PC-9 (cell line): ENCODE measurements at regions of chr14 and their contacts with region 1.

Region 1: DNA sequence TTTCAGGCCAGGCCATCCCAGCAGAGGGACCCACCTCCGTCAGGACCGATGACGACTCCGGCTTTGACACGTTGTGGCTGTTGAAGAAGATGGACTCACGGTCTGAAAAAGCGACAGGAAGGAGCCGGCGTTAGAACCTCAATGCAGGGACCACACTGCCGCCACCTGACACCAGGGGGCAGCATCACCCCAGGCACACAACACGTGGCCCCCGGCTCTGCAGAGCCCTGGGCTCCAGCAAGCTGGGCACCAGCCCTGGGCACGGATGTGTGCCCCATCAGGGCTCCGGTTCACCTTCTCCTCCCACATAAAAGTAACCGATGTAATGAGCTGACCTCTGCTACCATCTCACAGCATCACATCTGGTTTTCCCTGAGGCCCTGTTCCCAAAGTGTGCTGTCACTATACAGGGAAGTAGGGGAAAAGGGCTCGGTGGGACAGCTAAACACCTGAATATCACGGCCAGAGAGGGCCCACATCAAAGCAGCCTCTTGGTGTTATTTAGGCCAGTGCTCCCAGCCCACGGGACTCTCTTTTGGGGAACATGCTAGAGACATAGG is 29.0 kb downstream of the CHGA start:
- DNase-seq: peak; percentile 40 to 65
- H3K4me3 ChIP-seq: no peak overlapping the region
- H3K27ac ChIP-seq: no peak overlapping the region
- H3K4me1 ChIP-seq: peaks cover 5% of the 10 kb centered on the region; the same call in 1 of the 2 replicates
- H3K27me3 ChIP-seq: no peaks in the 10 kb centered on the region
- CTCF ChIP-seq: peak; percentile 95

Region 2: DNA sequence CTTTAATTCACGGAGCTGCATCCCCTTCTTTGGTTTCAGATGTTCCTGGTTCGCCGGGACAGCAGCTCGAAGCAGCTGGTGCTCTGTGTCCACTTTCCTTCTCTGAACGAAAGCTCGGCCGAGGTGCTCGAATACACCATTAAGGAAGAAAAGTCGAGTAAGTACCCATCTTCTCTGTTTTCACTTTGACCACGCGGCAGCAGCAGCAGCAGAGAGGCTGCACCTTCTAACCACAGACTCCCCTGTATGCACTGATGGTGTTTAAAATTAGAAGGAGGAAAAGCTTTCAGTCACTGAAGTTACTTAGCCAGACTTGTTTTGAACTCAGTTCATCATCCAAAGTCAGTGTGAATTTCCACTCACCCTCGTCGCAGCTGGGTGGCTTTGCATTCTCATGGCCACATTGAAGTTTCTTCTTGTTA is 374.7 kb before region 1 on chr14:
- CTCF ChIA-PET with region 1: no interaction called
- POLR2A ChIA-PET with region 1: no interaction called
- intact Hi-C with region 1: no loop called
- DNase-seq: no peak
- H3K4me3 ChIP-seq: no peak overlapping the region
- H3K27ac ChIP-seq: no peak overlapping the region
- H3K4me1 ChIP-seq: no peaks in the 10 kb centered on the region
- H3K27me3 ChIP-seq: no peaks in the 10 kb centered on the region
- CTCF ChIP-seq: no peak

Region 3: GRCh38 chr14:93137864-93138263 is 185.9 kb after region 1 on chr14:
- CTCF ChIA-PET with region 1: interaction called, 7 read pairs
- POLR2A ChIA-PET with region 1: no interaction called
- intact Hi-C with region 1: loop called (anchors 1 kb)
- DNase-seq: no peak
- H3K4me3 ChIP-seq: no peak overlapping the region
- H3K27ac ChIP-seq: no peak overlapping the region
- H3K4me1 ChIP-seq: peaks cover 30% of the 10 kb centered on the region
- H3K27me3 ChIP-seq: no peaks in the 10 kb centered on the region
- CTCF ChIP-seq: no peak

Region 4: GRCh38 chr14:93160353-93160801 is 208.4 kb after region 1 on chr14:
- CTCF ChIA-PET with region 1: interaction called, 12 read pairs
- POLR2A ChIA-PET with region 1: no interaction called
- intact Hi-C with region 1: no loop called
- DNase-seq: no peak
- H3K4me3 ChIP-seq: no peak overlapping the region
- H3K27ac ChIP-seq: no peak overlapping the region
- H3K4me1 ChIP-seq: peaks cover 2% of the 10 kb centered on the region; the same call in 1 of the 2 replicates
- H3K27me3 ChIP-seq: no peaks in the 10 kb centered on the region
- CTCF ChIP-seq: peak; percentile 52

Region 5: GRCh38 chr14:93173943-93174395 is 222.0 kb after region 1 on chr14:
- CTCF ChIA-PET with region 1: no interaction called
- POLR2A ChIA-PET with region 1: no interaction called
- intact Hi-C with region 1: loop called (anchors 1 kb)
- DNase-seq: no peak
- H3K4me3 ChIP-seq: no peak overlapping the region
- H3K27ac ChIP-seq: no peak overlapping the region
- H3K4me1 ChIP-seq: no peaks in the 10 kb centered on the region
- H3K27me3 ChIP-seq: no peaks in the 10 kb centered on the region
- CTCF ChIP-seq: no peak

Region 6: GRCh38 chr14:93219103-93219726 is 267.2 kb after region 1 on chr14:
- CTCF ChIA-PET with region 1: no interaction called
- POLR2A ChIA-PET with region 1: interaction called, 12 read pairs
- intact Hi-C with region 1: no loop called
- DNase-seq: peak in 1 of 2 experiments; percentile 65
- H3K4me3 ChIP-seq: no peak overlapping the region
- H3K27ac ChIP-seq: no peak overlapping the region
- H3K4me1 ChIP-seq: no peaks in the 10 kb centered on the region
- H3K27me3 ChIP-seq: no peaks in the 10 kb centered on the region
- CTCF ChIP-seq: peak; percentile 73